ENCODE measurements at regions of chrX and their contacts with region 1.

Region 1: GRCh38 chrX:30504309-30504708 is 73.3 kb downstream of the TASL start:
- DNase-seq: no peak
- H3K4me3 ChIP-seq: no peak overlapping the region
- H3K27ac ChIP-seq: no peak overlapping the region
- H3K4me1 ChIP-seq: no peaks in the 10 kb centered on the region
- H3K27me3 ChIP-seq: no peaks in the 10 kb centered on the region
- CTCF ChIP-seq: peak in 1 of 3 donors; percentile 42
- EP300 ChIP-seq: no peak
- POLR2A ChIP-seq: no peak

Region 2: DNA sequence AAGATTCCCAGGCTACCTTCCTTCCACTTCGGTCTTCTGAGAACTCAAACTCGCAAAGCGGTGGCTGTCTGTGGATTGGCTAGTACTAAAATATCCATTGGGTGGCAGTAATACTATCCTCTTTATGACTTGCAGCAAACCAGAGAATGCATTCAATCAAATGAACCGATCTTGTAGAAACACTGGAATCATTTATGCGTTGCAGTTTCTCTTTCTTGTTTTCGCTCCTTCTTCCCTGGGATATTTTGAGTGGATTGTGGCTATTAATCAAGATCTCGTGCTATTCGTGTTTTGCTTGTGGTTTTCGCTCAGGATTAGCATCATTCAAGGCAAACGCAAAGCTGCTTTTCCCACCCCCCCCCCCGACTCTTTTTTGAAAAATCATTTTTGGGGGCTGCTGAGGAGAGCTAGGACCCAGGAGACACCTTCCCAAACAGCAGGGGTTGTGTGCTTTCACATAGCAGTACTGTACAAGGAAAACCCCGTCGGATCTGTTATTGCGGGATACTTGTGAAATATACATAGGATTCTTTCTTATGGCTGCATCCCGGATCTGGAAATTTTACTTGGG is 1917.2 kb before region 1 on chrX and contains the start of gene IL1RAPL1:
- intact Hi-C with region 1: loop called in 1 of 4 experiments (anchors 10 kb)
- DNase-seq: peak in 1 of 5 donors; percentile 18
- H3K4me3 ChIP-seq: peak within 1 kb of the TSS; percentile 32
- H3K27ac ChIP-seq: no peak within 1 kb of the TSS
- H3K4me1 ChIP-seq: no peaks in the 10 kb centered on the region
- H3K27me3 ChIP-seq: no peaks in the 10 kb centered on the region
- CTCF ChIP-seq: no peak
- EP300 ChIP-seq: no peak
- POLR2A ChIP-seq: no peak
- total RNA-seq, gene IL1RAPL1: 0.27 to 1.3 (median 0.80) TPM

Region 3: GRCh38 chrX:30275498-30275897 is 228.8 kb before region 1 on chrX:
- intact Hi-C with region 1: loop called in 1 of 4 experiments (anchors 10 kb)
- DNase-seq: no peak
- H3K4me3 ChIP-seq: no peak overlapping the region
- H3K27ac ChIP-seq: no peak overlapping the region
- H3K4me1 ChIP-seq: no peaks in the 10 kb centered on the region
- H3K27me3 ChIP-seq: no peaks in the 10 kb centered on the region
- CTCF ChIP-seq: no peak
- EP300 ChIP-seq: no peak
- POLR2A ChIP-seq: no peak

Region 4: GRCh38 chrX:30612250-30612655 is 107.9 kb after region 1 on chrX:
- intact Hi-C with region 1: no loop called
- DNase-seq: no peak
- H3K4me3 ChIP-seq: no peak overlapping the region
- H3K27ac ChIP-seq: no peak overlapping the region
- H3K4me1 ChIP-seq: no peaks in the 10 kb centered on the region
- H3K27me3 ChIP-seq: no peaks in the 10 kb centered on the region
- CTCF ChIP-seq: no peak
- EP300 ChIP-seq: no peak
- POLR2A ChIP-seq: no peak